ENCODE measurements at regions of chr3 and their contacts with region 1.

Region 1: GRCh38 chr3:169668957-169669681 is 5.6 kb upstream of the MECOM start:
- DNase-seq: peak; percentile 97
- H3K4me3 Mint-ChIP-seq: peak overlapping the region; percentile 79
- H3K27ac Mint-ChIP-seq: peak overlapping the region; percentile 60
- H3K4me1 Mint-ChIP-seq: peaks cover 30% of the 10 kb centered on the region
- H3K27me3 Mint-ChIP-seq: no peaks in the 10 kb centered on the region
- CTCF ChIP-seq: peak; percentile 95

Region 2: GRCh38 chr3:169041677-169042171 is 627.4 kb before region 1 on chr3:
- CTCF ChIA-PET with region 1: interaction called, 16 read pairs
- intact Hi-C with region 1: loop called (anchors 2 kb)
- DNase-seq: no peak
- H3K4me3 Mint-ChIP-seq: no peak overlapping the region
- H3K27ac Mint-ChIP-seq: peak overlapping the region; percentile 28
- H3K4me1 Mint-ChIP-seq: peaks cover 12% of the 10 kb centered on the region
- H3K27me3 Mint-ChIP-seq: no peaks in the 10 kb centered on the region
- CTCF ChIP-seq: peak; percentile 63

Region 3: DNA sequence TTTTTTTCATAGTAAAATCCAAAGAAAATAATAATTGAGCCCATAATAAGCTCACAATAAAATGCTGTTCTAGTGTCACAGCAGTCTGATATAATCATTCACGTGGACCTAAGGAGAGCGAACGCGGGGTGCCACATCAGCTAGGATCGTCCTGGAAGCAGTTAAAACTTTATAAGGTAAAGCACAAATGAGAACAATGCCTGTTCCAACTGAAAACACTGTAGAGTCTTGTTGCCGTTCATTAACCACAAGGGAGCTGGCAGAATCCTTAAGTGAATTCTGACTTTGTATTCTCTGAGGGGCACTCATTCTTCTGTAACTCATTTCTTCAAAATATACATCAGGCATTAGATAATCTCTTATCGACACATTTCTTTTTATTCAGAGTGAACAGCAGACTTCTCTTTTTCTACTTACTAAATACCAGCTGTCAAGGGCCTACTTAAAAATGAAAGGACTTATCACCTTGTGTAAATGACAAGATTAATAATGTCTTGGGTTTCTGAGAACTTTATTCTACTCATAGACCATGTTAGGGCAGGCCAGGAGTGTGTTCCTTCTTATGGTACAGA is 530.2 kb before region 1 on chr3:
- CTCF ChIA-PET with region 1: interaction called, 27 read pairs
- intact Hi-C with region 1: loop called (anchors 2 kb)
- DNase-seq: no peak
- H3K4me3 Mint-ChIP-seq: peak overlapping the region; percentile 62
- H3K27ac Mint-ChIP-seq: peak overlapping the region; percentile 83
- H3K4me1 Mint-ChIP-seq: peaks cover 60% of the 10 kb centered on the region
- H3K27me3 Mint-ChIP-seq: no peaks in the 10 kb centered on the region
- CTCF ChIP-seq: no peak

Region 4: DNA sequence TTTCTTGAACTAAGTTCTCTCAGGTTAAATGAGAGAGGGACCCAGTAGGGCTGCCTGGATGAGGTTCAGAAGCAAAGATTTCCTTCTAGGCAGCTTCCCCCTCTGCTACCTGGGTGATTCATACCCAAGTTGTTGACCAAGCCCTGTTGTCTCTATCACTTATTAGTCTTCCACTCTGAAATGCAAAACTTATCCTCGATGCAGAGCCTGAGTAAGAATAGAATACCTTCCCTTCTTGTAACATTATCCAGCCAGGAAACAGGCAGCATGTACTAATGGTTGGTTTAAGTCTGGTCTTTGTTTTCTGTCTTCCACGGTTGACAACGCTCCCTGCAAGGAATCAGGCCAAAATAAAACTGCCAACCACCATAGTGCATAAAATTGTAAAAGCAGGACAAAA is 382.9 kb before region 1 on chr3:
- CTCF ChIA-PET with region 1: interaction called, 5 read pairs
- intact Hi-C with region 1: loop called (anchors 5 kb)
- DNase-seq: peak; percentile 66
- H3K4me3 Mint-ChIP-seq: peak overlapping the region; percentile 68
- H3K27ac Mint-ChIP-seq: peak overlapping the region; percentile 98
- H3K4me1 Mint-ChIP-seq: peaks cover 54% of the 10 kb centered on the region
- H3K27me3 Mint-ChIP-seq: no peaks in the 10 kb centered on the region
- CTCF ChIP-seq: no peak

Measured in Calu3 (cell line).